Endothelial cell of umbilical vein (primary cell): ENCODE measurements at regions of chr12 and their contacts with region 1.

Region 1: DNA sequence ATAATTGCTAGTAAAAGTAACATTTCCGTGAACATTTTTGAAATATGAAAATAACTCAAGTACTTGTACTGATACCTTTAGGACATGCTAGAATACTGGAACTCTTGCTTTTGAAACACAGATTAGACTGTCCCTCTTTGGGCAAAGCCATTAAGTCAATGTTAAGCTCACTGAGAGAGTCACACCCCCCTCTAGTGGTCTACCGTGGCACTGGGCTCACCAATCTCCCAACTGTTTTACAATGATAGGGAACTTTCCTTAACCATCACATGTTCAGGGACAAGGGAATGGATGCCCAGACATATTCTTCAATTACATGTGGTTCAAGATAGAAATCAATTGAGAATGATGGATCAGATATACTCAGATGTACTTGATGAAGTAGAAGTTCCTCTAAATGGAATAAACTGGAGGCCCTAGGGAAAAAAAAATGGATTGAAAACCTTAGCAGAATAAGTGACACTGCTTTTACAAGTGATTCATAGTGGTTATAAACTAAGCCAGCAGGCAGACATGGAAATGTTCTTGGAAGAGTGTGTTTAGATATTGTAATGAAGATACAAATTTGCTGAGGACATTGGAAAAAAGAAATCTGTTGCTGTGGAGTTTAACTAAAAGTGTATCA is 17.8 kb downstream of the NANOG start:
- DNase-seq: peak; percentile 88
- H3K4me3 ChIP-seq: no peak overlapping the region
- H3K27ac ChIP-seq: no peak overlapping the region
- H3K4me1 ChIP-seq: no peaks in the 10 kb centered on the region
- H3K27me3 ChIP-seq: no peaks in the 10 kb centered on the region
- CTCF ChIP-seq: peak; percentile 81 to 92
- POLR2A ChIP-seq: no peak

Region 2: DNA sequence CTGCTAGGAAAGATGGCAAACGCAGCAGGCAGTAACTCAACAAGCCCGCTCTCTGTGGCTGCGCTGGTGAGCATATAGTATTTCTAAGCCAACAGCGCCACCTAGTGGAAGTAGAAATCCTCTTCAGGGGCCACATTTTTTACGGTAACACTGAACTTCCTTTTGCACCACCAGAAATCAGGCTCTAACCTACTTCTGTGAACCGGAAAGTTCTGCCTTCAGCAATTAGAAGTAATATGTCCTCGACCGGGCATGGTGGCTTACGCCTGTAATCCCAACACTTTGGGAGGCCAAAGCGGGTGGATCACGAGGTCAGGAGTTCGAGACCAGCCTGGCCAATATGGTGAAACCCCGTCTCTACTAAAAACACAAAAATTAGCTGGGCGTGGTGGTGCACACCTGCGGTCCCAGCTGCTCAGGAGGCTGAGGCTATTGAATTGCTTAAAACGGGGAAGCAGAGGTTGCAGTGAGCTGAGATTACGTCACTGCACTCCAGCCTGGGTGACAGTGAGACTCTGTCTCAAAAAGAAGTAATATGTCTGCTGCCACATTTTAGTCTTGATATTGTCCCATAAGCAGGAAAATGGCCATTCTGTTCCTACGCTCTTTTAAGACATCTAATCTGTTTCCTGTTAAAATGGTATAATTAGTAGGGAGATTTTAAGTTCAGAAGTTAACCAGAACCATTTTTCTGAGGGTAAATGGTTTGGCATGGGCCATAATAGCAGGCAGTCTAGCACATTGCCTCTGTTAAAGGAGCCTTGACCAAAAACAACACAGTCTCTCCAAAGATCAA is 168.0 kb before region 1 on chr12:
- CTCF ChIA-PET with region 1: interaction called, 59 read pairs
- POLR2A ChIA-PET with region 1: no interaction called
- dilution Hi-C with region 1: no loop called
- intact Hi-C with region 1: no loop called
- DNase-seq: peak; percentile 75
- H3K4me3 ChIP-seq: peak overlapping the region in 1 of 3 experiments; percentile 16
- H3K27ac ChIP-seq: no peak overlapping the region
- H3K4me1 ChIP-seq: no peaks in the 10 kb centered on the region
- H3K27me3 ChIP-seq: peaks cover 5 to 7% of the 10 kb centered on the region in 2 experiments
- CTCF ChIP-seq: peak; percentile 70
- POLR2A ChIP-seq: no peak

Region 3: GRCh38 chr12:7668171-7668570 is 138.8 kb before region 1 on chr12:
- CTCF ChIA-PET with region 1: interaction called, 14 read pairs
- POLR2A ChIA-PET with region 1: no interaction called
- dilution Hi-C with region 1: no loop called
- intact Hi-C with region 1: no loop called
- DNase-seq: no peak
- H3K4me3 ChIP-seq: no peak overlapping the region
- H3K27ac ChIP-seq: no peak overlapping the region
- H3K4me1 ChIP-seq: no peaks in the 10 kb centered on the region
- H3K27me3 ChIP-seq: no peaks in the 10 kb centered on the region
- CTCF ChIP-seq: no peak
- POLR2A ChIP-seq: no peak

Region 4: DNA sequence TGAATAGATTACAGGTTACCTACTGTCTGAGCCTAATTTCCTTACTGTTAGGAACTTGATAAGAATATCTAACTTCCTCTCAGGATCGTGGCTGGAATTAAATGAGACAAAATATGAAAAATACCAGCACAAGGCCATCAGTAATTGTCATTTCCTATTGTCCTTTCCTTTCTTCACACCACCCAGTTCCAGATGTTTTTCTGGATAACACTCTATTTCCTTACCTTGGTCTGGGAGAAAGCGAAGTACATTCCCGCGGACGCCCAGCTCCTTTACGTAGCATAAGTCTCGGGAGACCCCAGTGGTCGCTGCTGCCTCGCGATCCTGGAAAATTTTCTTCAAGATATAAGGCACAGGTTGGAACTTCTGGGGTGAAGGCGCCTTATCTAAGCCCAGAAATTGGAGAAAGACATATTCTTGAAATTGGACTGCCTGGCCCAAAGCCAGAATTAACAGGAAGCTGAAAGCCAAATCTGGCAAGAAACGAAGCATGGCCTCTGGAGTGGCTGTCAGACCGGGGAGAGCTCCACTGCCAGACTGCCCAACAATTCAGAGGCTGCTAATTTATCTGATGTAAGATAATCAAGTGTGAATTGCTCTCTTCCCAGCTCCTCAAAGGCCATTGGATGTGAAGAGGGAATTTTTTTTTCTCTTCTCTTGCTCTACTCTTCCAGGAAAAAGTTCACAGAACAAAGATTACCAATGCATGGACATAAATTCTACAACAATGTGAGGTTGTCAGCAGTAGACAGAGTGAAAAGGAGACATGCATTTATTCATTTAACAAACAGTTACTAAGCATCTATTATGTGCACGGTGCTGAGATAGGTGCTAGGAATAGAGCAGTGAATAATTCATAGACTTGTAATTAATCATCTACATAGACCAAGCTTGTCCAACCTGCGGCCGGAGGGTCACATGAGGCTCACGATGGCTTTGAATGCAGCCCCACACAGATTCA is 111.5 kb before region 1 on chr12 and contains the start of gene GDF3:
- CTCF ChIA-PET with region 1: interaction called, 15 read pairs
- POLR2A ChIA-PET with region 1: interaction called, 3 read pairs
- dilution Hi-C with region 1: no loop called
- intact Hi-C with region 1: no loop called
- DNase-seq: peak; percentile 94
- H3K4me3 ChIP-seq: peak within 1 kb of the TSS in 1 of 3 experiments; percentile 21
- H3K27ac ChIP-seq: peak within 1 kb of the TSS; percentile 82
- H3K4me1 ChIP-seq: peaks cover 16% of the 10 kb centered on the region
- H3K27me3 ChIP-seq: no peaks in the 10 kb centered on the region
- CTCF ChIP-seq: no peak
- POLR2A ChIP-seq: peak; percentile 48
- total RNA-seq, gene GDF3: 4.1 and 5.0 TPM in 2 replicates

Region 5: DNA sequence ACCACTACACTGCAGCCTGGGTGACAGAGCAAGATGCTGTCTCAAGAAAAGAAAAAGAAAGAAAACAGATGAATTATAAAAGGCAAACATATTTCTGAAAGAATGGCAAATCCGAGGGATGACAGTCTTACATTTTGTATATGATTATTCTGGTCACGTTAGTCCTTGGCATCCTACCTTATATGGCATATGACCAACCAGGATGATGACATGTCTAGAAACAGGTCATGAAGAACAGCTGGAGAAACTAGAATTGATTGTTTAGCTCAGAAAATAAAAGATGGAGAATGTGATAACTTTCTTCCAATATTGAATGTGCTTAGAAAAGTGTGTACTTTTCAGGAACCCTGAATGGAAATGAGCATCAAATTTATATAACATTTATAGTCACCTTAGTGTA is 46.6 kb after region 1 on chr12:
- CTCF ChIA-PET with region 1: no interaction called
- POLR2A ChIA-PET with region 1: no interaction called
- dilution Hi-C with region 1: no loop called
- intact Hi-C with region 1: no loop called
- DNase-seq: no peak
- H3K4me3 ChIP-seq: no peak overlapping the region
- H3K27ac ChIP-seq: no peak overlapping the region
- H3K4me1 ChIP-seq: no peaks in the 10 kb centered on the region
- H3K27me3 ChIP-seq: peaks cover 0 to 3% of the 10 kb centered on the region in 2 experiments
- CTCF ChIP-seq: no peak
- POLR2A ChIP-seq: no peak

Region 6: DNA sequence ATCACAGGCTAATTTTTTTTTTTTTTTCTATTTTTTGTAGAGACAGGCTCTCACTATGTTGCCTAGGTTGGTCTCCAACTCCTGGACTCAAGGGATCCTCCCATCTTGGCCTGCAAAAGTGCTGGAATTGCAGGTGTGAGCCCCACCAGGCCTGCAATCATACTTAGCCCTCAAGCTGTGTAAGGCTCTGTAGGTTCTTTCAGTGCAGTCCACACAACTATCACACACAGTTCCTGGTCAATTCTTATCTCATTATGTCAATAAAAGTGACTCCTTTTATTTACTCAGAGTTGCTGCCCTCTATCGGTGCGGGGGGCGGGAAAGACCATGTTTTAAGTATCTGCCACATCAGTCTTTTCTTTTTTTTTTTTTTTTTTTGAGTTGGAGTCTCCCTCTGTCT is 100.0 kb after region 1 on chr12:
- CTCF ChIA-PET with region 1: interaction called, 11 read pairs
- POLR2A ChIA-PET with region 1: no interaction called
- dilution Hi-C with region 1: no loop called
- intact Hi-C with region 1: no loop called
- DNase-seq: peak; percentile 75
- H3K4me3 ChIP-seq: no peak overlapping the region
- H3K27ac ChIP-seq: no peak overlapping the region
- H3K4me1 ChIP-seq: peaks cover 6% of the 10 kb centered on the region
- H3K27me3 ChIP-seq: peaks cover 0 to 10% of the 10 kb centered on the region in 2 experiments
- CTCF ChIP-seq: peak; percentile 45 to 55
- POLR2A ChIP-seq: no peak